ENCODE measurements at regions of chr10 and their contacts with region 1.

Region 1: GRCh38 chr10:6020826-6021225 is 41.3 kb downstream of the IL2RA start:
- DNase-seq: no peak

Region 2: DNA sequence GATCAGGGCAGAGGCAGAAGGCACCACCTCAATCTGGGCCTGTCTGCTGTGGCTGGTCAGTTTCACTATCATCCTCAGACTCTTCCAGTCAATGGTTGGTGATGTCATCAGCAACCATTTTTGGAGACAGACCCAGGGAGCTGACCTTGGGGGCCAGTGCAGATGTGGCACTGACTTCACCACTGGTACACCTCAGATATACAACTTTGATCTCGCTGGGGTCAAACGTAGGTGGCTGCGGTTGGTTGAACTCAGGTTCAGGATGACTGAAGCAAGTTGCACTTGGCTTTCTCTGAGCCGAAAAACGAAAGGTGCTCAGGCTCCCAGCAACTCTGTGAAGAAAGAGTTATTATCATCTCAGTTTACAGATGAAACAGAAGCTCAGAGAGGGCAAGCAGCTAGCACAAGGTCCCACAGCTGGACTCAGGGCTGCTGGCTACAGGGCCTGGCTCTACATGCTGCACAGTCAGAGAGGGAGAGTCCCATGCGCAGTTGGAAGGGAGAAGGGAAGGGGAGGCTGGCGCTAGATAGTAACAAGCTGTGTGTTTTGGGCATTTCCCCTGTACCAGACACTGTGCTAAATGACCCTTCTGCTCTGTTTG is 158.4 kb before region 1 on chr10:
- intact Hi-C with region 1: no loop called
- DNase-seq: no peak

Region 3: DNA sequence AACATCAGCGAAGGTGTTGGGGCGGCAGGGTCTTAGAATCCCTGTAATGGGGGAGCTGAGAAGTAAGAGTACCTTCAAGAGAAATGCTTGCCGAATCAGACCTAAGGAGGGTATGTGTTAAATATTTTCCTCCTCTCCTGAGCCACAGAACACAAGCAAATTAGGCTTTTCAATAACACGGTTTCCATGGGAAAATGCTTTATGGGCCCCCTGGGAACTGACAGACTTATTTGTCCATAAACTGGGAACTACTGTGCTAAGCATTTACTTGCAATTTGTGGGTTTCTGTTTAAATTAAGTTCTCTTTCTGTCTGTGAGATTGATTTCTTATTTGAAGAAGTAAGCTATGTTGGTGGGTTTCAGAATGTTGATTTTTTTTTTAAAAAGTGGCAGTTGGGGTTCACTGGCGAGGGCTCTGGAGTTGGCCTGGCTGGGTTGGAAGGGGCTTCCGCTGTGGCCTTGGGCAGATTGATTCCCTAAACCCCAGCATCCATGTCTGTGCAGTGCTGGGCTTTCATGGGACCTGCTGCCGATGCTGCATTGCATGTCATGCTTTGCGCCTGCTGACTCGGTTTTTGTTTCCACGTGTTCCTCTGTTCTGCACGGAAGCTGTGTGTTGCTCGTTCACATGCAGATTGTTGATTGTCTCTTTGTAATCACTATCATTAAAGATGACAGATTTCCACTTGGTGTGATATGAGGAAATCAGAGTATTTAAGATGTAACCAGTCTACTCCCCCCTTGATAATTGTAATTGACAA is 75.2 kb after region 1 on chr10:
- intact Hi-C with region 1: loop called in 1 of 2 experiments (anchors 2 kb)
- DNase-seq: no peak

Measured in posterior vena cava (tissue), 2 donors.